Gastrocnemius medialis (tissue), 4 donors: ENCODE measurements at regions of chr16 and their contacts with region 1.

Region 1: GRCh38 chr16:85759631-85760419 is 8.9 kb upstream of the C16orf74 start:
- DNase-seq: peak in 1 of 2 donors; percentile 14
- ATAC-seq: peak; percentile 46 to 77
- H3K4me3 ChIP-seq: no peak overlapping the region
- H3K27ac ChIP-seq: no peak overlapping the region
- H3K4me1 ChIP-seq: no peaks in the 10 kb centered on the region
- H3K27me3 ChIP-seq: peaks cover 5 to 7% (median 5%) of the 10 kb centered on the region in 3 donors
- CTCF ChIP-seq: peak in 4 of 5 experiments; percentile 65 to 73 (median 70)
- POLR2A ChIP-seq: no peak

Region 2: GRCh38 chr16:85227084-85227945 is 532.5 kb before region 1 on chr16:
- in situ Hi-C with region 1: no loop called
- intact Hi-C with region 1: no loop called
- DNase-seq: no peak
- ATAC-seq: no peak
- H3K4me3 ChIP-seq: no peak overlapping the region
- H3K27ac ChIP-seq: no peak overlapping the region
- H3K4me1 ChIP-seq: peaks cover 3 to 12% of the 10 kb centered on the region in 2 donors
- H3K27me3 ChIP-seq: no peaks in the 10 kb centered on the region
- CTCF ChIP-seq: no peak
- POLR2A ChIP-seq: no peak

Region 3: DNA sequence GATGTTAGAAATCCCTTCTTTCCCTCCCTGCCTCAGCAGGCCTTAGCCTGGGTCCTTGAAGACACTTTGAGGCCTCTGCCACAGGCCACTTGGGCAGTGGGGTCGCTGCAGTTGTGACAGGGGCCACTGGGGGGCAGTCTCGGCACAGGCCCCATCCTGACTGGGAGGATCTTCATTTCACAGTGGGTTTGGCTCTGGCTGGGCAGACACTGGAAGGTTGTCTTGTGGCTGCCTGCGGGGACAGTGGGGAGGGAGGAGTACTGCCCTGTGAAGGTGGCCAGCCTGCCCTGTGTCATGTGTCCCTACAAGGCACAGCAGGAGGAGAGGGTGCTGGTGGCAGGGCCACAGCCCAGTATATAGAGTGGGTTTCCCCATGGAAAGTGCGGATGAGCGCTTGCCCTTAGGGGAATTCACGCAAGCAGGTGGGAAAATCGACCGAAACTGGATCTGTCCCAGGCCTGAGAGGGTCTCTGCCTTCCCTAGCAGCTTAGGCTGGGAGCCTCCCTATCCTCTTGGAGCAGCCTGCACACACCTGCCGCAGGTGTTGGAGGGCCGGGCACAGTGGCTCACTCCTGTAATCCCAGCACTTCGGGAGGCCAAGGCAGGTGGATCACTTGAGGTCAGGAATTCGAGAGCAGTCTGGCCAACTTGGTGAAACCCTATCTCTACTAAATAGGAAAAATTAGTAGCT is 99.9 kb before region 1 on chr16:
- in situ Hi-C with region 1: no loop called
- intact Hi-C with region 1: loop called (anchors 1 kb)
- DNase-seq: peak; percentile 69 to 88
- ATAC-seq: peak; percentile 82 to 86
- H3K4me3 ChIP-seq: no peak overlapping the region
- H3K27ac ChIP-seq: peak overlapping the region; percentile 56 to 65 (median 60)
- H3K4me1 ChIP-seq: peaks cover 21 to 23% of the 10 kb centered on the region in 2 donors
- H3K27me3 ChIP-seq: no peaks in the 10 kb centered on the region
- CTCF ChIP-seq: peak; percentile 88 to 94 (median 91)
- POLR2A ChIP-seq: no peak

Region 4: GRCh38 chr16:85675251-85675927 is 84.4 kb before region 1 on chr16:
- in situ Hi-C with region 1: no loop called
- intact Hi-C with region 1: loop called (anchors 5 kb)
- DNase-seq: no peak
- ATAC-seq: no peak
- H3K4me3 ChIP-seq: no peak overlapping the region
- H3K27ac ChIP-seq: no peak overlapping the region
- H3K4me1 ChIP-seq: peaks cover 5 to 8% of the 10 kb centered on the region in 2 donors
- H3K27me3 ChIP-seq: no peaks in the 10 kb centered on the region
- CTCF ChIP-seq: no peak
- POLR2A ChIP-seq: no peak

Region 5: GRCh38 chr16:85699628-85700027 is 60.2 kb before region 1 on chr16:
- in situ Hi-C with region 1: no loop called
- intact Hi-C with region 1: no loop called
- DNase-seq: no peak
- ATAC-seq: peak in 1 of 2 donors; percentile 62
- H3K4me3 ChIP-seq: no peak overlapping the region
- H3K27ac ChIP-seq: no peak overlapping the region
- H3K4me1 ChIP-seq: no peaks in the 10 kb centered on the region
- H3K27me3 ChIP-seq: peaks cover 0 to 12% (median 5%) of the 10 kb centered on the region in 3 donors
- CTCF ChIP-seq: no peak
- POLR2A ChIP-seq: no peak

Region 6: GRCh38 chr16:85878874-85879273 is 119.0 kb after region 1 on chr16:
- in situ Hi-C with region 1: no loop called
- intact Hi-C with region 1: no loop called
- DNase-seq: no peak
- ATAC-seq: no peak
- H3K4me3 ChIP-seq: no peak overlapping the region
- H3K27ac ChIP-seq: no peak overlapping the region
- H3K4me1 ChIP-seq: no peaks in the 10 kb centered on the region
- H3K27me3 ChIP-seq: no peaks in the 10 kb centered on the region
- CTCF ChIP-seq: no peak
- POLR2A ChIP-seq: no peak